H1 (cell line): ENCODE measurements at regions of chr2 and their contacts with region 1.

Region 1: GRCh38 chr2:161992526-161992925 is 81.5 kb downstream of the DPP4 start:
- DNase-seq: no peak
- H3K4me3 ChIP-seq: no peak overlapping the region
- H3K27ac ChIP-seq: no peak overlapping the region
- H3K4me1 ChIP-seq: no peaks in the 10 kb centered on the region
- H3K27me3 ChIP-seq: no peaks in the 10 kb centered on the region
- CTCF ChIP-seq: no peak
- EP300 ChIP-seq: no peak
- POLR2A ChIP-seq: no peak
- RAD21 ChIP-seq: no peak

Region 2: DNA sequence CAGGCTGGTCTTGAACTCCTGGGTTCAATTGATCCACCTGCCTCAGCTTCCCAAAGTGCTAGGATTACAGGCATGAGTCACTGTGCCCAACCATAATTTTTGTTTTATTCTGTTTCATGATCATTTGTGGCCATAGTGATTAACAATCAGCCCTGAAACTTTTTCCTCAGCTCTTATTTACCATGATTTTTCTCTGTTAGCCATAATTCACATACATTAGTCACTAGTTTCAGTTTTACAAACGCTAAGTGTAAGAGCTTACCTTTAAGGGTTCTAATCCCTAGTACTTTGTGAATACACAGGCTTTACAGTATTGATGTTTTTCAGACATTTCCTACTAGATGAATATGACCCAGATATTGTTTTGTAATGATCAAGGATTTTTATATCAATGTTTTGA is 134.6 kb before region 1 on chr2:
- CTCF ChIA-PET with region 1: no interaction called
- POLR2A ChIA-PET with region 1: no interaction called
- DNase-seq: no peak
- H3K4me3 ChIP-seq: no peak overlapping the region
- H3K27ac ChIP-seq: no peak overlapping the region
- H3K4me1 ChIP-seq: no peaks in the 10 kb centered on the region
- H3K27me3 ChIP-seq: no peaks in the 10 kb centered on the region
- CTCF ChIP-seq: no peak
- EP300 ChIP-seq: no peak
- POLR2A ChIP-seq: no peak
- RAD21 ChIP-seq: no peak

Region 3: DNA sequence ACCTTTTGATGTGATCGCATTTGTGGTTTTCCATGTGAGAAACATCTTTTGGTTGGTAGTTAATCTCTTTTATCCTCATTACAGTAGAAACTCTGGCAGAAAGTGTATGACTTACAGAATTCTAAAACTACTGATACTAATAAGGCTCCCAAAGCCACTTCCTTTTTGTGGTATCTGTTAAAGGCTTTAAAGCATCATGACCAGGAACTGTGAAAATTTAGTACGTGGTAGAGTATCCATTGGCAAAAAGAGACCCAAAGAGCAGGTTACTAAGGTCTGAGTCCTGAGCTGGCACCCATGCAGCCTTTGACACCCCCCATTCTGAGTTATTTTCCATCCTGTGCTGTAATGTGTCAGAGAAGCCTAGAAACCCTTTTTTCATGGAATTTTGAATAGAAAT is 13.0 kb before region 1 on chr2:
- CTCF ChIA-PET with region 1: interaction called, 20 read pairs
- POLR2A ChIA-PET with region 1: no interaction called
- DNase-seq: no peak
- H3K4me3 ChIP-seq: no peak overlapping the region
- H3K27ac ChIP-seq: no peak overlapping the region
- H3K4me1 ChIP-seq: peaks cover 0 to 2% (median 0%) of the 10 kb centered on the region in 4 experiments; a peak in 1 of 7 replicates
- H3K27me3 ChIP-seq: no peaks in the 10 kb centered on the region
- CTCF ChIP-seq: no peak
- EP300 ChIP-seq: no peak
- POLR2A ChIP-seq: no peak
- RAD21 ChIP-seq: no peak

Region 4: GRCh38 chr2:162002623-162003240 is 10.2 kb after region 1 on chr2:
- CTCF ChIA-PET with region 1: interaction called, 15 read pairs
- POLR2A ChIA-PET with region 1: interaction called, 3 read pairs
- DNase-seq: no peak
- H3K4me3 ChIP-seq: peak overlapping the region in 2 of 4 experiments; percentile 6 to 8; a peak in 1 of 8 replicates
- H3K27ac ChIP-seq: 0 out of 2 replicates have a peak overlapping the region, but pooled peaks have one; percentile 38
- H3K4me1 ChIP-seq: peaks cover 5 to 18% (median 12%) of the 10 kb centered on the region in 4 experiments; a peak in 6 of 7 replicates
- H3K27me3 ChIP-seq: no peaks in the 10 kb centered on the region
- CTCF ChIP-seq: no peak
- EP300 ChIP-seq: no peak
- POLR2A ChIP-seq: no peak
- RAD21 ChIP-seq: no peak

Region 5: GRCh38 chr2:162018530-162018929 is 26.0 kb after region 1 on chr2:
- CTCF ChIA-PET with region 1: interaction called, 16 read pairs
- POLR2A ChIA-PET with region 1: no interaction called
- DNase-seq: no peak
- H3K4me3 ChIP-seq: no peak overlapping the region
- H3K27ac ChIP-seq: no peak overlapping the region
- H3K4me1 ChIP-seq: peaks cover 0 to 3% (median 0%) of the 10 kb centered on the region in 4 experiments; a peak in 1 of 7 replicates
- H3K27me3 ChIP-seq: no peaks in the 10 kb centered on the region
- CTCF ChIP-seq: no peak
- EP300 ChIP-seq: no peak
- POLR2A ChIP-seq: no peak
- RAD21 ChIP-seq: no peak

Region 6: DNA sequence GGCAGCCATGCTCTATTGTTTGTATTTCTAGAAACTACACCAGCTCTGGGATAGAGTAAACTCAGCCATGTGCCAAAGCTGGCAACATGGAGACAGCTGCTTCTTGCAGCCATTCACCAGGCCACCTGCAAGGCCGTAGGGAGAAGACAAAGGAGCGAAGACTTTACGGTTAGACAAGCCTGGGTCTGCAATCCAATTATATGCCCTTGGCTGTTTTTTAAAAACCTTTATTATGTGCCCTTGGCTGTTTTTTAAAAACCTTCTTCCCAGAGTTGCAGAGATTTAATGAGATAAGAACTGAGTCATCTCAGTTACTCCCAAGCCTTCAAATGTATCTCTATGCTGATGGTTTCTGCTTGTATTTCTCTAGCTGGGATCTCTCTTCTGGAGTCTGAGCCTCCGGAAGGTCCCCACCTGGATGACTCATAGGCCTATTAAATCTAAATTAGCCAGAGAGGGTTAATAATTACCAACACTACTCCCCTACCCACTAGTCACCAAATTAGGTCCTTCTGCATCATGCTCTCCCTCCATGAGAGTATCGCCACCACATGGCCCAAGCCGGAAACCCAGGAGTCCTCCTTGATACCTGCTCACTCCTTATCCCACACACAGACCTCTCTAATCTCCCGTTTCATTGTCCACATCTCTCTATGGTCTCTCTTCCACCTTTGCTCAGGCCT is 98.9 kb after region 1 on chr2:
- CTCF ChIA-PET with region 1: interaction called, 11 read pairs
- POLR2A ChIA-PET with region 1: no interaction called
- DNase-seq: peak; percentile 5 to 60
- H3K4me3 ChIP-seq: no peak overlapping the region
- H3K27ac ChIP-seq: no peak overlapping the region
- H3K4me1 ChIP-seq: no peaks in the 10 kb centered on the region
- H3K27me3 ChIP-seq: no peaks in the 10 kb centered on the region
- CTCF ChIP-seq: peak; percentile 54 to 68 (median 62)
- EP300 ChIP-seq: no peak
- POLR2A ChIP-seq: no peak
- RAD21 ChIP-seq: peak; percentile 70 to 76